ENCODE measurements at regions of chr16 and their contacts with region 1.

Region 1: GRCh38 chr16:12803203-12804097 is at the start of gene CPPED1:
- DNase-seq: peak; percentile 97
- total RNA-seq, gene CPPED1: 13.3 TPM

Region 2: GRCh38 chr16:12558641-12559040 is 244.8 kb before region 1 on chr16:
- intact Hi-C with region 1: no loop called
- DNase-seq: no peak

Region 3: GRCh38 chr16:12573730-12574383 is 229.6 kb before region 1 on chr16:
- intact Hi-C with region 1: loop called (anchors 10 kb)
- DNase-seq: peak; percentile 76

Region 4: GRCh38 chr16:12767897-12768296 is 35.6 kb before region 1 on chr16:
- intact Hi-C with region 1: no loop called
- DNase-seq: no peak

Measured in cardiac septum (tissue), 1 donor.